MCF 10A (cell line): ENCODE measurements at regions of chrX and their contacts with region 1.

Region 1: DNA sequence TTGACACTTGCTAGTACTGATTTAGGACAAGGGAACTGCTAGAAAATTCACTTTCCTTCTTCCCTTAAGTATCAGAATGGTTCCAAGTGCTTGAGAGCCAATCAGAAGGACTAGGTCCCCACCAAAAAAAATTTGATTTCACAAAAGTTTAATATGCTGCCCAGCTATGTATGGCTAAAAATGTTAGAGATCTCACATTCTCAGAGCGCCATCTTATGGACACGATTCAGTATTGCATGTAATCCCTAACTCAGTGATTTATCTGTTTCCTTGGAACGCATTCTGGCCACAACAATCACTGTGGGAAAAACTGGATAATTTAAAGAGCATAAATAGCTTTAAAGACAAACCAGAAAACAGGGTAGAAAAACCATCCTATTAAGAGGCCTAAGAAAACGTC is 255.1 kb upstream of the GPC4 start:
- DNase-seq: peak; percentile 57
- H3K4me3 Mint-ChIP-seq: no peak overlapping the region
- H3K27ac Mint-ChIP-seq: no peak overlapping the region
- H3K4me1 Mint-ChIP-seq: no peaks in the 10 kb centered on the region
- H3K27me3 Mint-ChIP-seq: peaks cover 48% of the 10 kb centered on the region
- CTCF ChIP-seq: peak; percentile 79

Region 2: GRCh38 chrX:132631579-132632232 is 1038.7 kb before region 1 on chrX:
- CTCF ChIA-PET with region 1: no interaction called
- POLR2A ChIA-PET with region 1: no interaction called
- intact Hi-C with region 1: loop called (anchors 10 kb)
- DNase-seq: peak; percentile 33
- H3K4me3 Mint-ChIP-seq: no peak overlapping the region
- H3K27ac Mint-ChIP-seq: no peak overlapping the region
- H3K4me1 Mint-ChIP-seq: no peaks in the 10 kb centered on the region
- H3K27me3 Mint-ChIP-seq: peaks cover 63% of the 10 kb centered on the region
- CTCF ChIP-seq: peak; percentile 38